Activated CD4-positive, alpha-beta memory T cell treated with anti-CD3 and anti-CD28 coated beads, Interleukin-2, amount 10 ng/mL, durations not matched to agents 7 days and 5 days (primary cell): ENCODE measurements at regions of chr15 and their contacts with region 1.

Region 1: GRCh38 chr15:85504749-85505676 is 124.6 kb downstream of the AKAP13 start:
- DNase-seq: peak; percentile 39
- H3K4me3 Mint-ChIP-seq: no peak overlapping the region
- H3K27ac Mint-ChIP-seq: no peak overlapping the region
- H3K4me1 Mint-ChIP-seq: peaks cover 42% of the 10 kb centered on the region
- H3K27me3 Mint-ChIP-seq: no peaks in the 10 kb centered on the region

Region 2: DNA sequence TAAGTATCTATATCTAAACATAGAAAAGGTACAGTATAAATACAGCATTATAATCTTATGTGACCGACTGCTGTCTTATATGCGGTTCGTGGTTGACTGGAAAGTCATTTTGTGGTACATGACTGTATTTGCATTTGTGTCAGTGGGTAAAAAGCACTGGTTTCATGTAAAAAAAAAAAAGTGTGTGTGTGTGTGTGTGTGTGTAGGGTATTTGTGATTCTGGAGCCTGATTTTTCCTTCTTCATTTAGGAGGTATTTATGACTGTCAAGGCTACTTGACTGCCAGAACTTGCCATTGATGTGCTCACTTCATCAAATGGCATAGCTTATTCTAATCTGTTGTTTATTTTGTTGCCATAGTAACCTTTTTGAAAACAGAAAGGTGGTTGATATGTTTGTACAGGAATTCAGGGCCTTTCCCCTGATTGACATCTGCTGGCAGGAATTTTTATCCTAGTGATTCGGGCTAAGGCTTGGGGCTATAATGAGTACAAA is 61.4 kb before region 1 on chr15:
- CTCF ChIA-PET with region 1: no interaction called
- POLR2A ChIA-PET with region 1: no interaction called
- DNase-seq: peak; percentile 39
- H3K4me3 Mint-ChIP-seq: no peak overlapping the region
- H3K27ac Mint-ChIP-seq: no peak overlapping the region
- H3K4me1 Mint-ChIP-seq: peaks cover 36% of the 10 kb centered on the region
- H3K27me3 Mint-ChIP-seq: peaks cover 1% of the 10 kb centered on the region

Region 3: DNA sequence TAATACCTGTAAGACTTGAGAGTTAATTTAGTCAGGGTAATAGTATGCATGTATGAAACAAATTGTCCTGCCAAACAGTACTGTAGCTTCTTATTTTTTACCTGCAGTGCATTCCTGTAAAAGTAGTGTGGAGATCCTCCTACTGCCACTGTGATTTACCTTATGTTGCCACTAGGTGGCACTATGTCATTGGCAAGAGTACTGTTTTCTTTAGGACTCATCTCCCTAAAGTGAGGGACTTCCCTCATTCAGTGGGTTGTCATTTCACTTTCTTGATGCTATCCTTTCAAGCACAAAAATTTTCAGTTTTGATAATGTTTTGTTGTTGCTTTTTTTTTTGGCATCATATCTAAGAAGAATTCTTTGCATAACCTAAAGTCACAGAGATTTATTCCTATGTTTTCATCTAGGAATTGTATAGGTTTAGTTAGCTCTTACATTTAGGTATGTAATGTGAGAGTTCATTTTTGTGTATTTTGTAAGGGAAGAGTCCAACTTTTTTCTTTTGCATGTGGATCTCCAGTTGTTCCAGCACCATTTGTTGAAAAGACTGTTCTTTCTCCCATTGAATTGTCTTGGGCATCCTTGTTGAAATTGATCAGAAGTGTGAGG is 19.0 kb before region 1 on chr15:
- CTCF ChIA-PET with region 1: interaction called, 28 read pairs
- POLR2A ChIA-PET with region 1: interaction called, 3 read pairs
- DNase-seq: peak; percentile 55
- H3K4me3 Mint-ChIP-seq: no peak overlapping the region
- H3K27ac Mint-ChIP-seq: no peak overlapping the region
- H3K4me1 Mint-ChIP-seq: peaks cover 60% of the 10 kb centered on the region
- H3K27me3 Mint-ChIP-seq: no peaks in the 10 kb centered on the region

Region 4: GRCh38 chr15:85598718-85599398 is 93.8 kb after region 1 on chr15:
- CTCF ChIA-PET with region 1: no interaction called
- POLR2A ChIA-PET with region 1: no interaction called
- DNase-seq: no peak
- H3K4me3 Mint-ChIP-seq: no peak overlapping the region
- H3K27ac Mint-ChIP-seq: no peak overlapping the region
- H3K4me1 Mint-ChIP-seq: peaks cover 56% of the 10 kb centered on the region
- H3K27me3 Mint-ChIP-seq: no peaks in the 10 kb centered on the region